ENCODE measurements at regions of chr15 and their contacts with region 1.

Region 1: DNA sequence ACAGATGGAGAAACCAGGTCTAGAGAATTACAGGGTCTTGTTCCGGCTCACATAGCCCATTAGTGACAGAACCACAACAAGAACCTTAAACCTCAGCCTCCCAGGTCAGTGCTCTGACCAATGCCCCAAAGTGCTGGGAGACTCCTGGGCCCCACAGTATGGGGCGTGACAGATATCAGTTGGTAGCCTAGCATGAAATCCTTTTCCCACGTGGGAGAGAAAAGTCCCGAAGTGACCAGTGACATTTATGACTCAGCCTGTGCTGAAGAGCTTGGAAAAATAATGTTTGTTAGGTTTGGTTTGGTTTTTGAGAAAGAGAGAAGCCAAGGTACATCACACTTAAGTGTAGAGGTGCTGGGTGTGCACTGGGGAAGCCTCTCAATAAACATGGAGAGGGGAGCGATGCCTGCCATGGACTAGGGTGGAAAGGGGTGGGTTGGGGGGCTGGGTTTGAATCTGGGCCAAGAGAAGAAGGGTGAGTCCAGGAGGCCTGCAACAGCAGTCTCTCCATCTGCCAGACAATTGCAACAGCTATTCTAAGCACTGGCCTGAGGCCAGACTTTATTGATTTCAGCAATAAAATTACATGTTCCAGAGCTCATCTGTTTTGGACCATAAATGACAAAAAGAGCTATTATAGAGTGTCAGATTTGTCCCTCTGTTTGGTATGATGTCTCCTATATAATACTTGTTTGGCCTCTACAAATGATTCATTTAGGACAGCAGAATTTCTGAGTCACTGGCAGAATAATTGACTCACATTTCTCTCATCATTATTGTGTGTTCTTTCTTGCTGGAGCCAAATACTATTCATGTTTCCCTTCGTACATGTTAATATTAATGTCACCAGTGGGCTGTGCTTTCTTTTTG is 43.4 kb downstream of the C2CD4A start:
- DNase-seq: no peak
- H3K4me3 Mint-ChIP-seq: peak overlapping the region; percentile 50
- H3K27ac Mint-ChIP-seq: peak overlapping the region; percentile 68
- H3K4me1 Mint-ChIP-seq: peaks cover 12% of the 10 kb centered on the region
- H3K27me3 Mint-ChIP-seq: peaks cover 2% of the 10 kb centered on the region

Region 2: DNA sequence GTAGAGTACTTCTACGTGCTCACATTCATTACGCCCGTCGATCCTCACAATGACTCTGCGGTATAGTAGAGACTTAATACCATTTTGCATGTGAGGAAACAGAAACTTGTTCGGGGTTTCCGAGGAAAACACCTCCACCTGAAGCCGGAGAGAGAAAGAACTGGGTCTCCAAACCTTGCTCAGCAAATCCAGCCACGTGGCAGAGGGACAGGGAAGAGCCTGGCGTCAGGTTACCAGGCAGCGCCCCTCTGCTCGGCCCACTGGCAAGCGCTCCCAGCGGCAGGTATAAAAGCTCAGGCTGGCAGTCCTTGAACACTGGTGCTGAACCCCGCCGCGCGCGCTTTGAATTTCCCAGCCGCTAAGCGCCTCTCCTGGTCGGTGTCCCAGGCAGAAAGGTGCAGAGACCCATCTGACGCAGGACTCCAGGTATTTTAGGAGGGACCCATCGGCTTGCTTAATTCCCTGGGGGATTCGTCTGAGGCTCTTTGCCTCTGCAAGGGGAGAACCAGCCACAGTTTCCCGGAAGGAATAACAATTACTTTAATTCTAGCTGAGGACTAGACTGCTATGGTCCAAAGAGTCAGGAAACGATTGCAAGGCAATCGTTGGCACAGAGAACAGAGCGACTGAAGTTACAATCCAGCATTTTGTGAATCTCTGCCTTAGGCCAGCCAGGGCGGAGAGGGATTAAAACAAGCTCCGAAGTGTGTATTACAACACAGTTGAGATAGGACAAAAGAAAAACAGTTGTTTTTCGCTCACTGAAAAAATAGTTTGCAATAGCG is 43.4 kb before region 1 on chr15 and contains the start of gene C2CD4A:
- intact Hi-C with region 1: no loop called
- DNase-seq: peak; percentile 84
- H3K4me3 Mint-ChIP-seq: peak within 1 kb of the TSS; percentile 78
- H3K27ac Mint-ChIP-seq: peak within 1 kb of the TSS; percentile 14
- H3K4me1 Mint-ChIP-seq: peaks cover 21% of the 10 kb centered on the region
- H3K27me3 Mint-ChIP-seq: peaks cover 54% of the 10 kb centered on the region
- total RNA-seq, gene C2CD4A: 0.05 and 0.24 TPM in 2 replicates

Region 3: DNA sequence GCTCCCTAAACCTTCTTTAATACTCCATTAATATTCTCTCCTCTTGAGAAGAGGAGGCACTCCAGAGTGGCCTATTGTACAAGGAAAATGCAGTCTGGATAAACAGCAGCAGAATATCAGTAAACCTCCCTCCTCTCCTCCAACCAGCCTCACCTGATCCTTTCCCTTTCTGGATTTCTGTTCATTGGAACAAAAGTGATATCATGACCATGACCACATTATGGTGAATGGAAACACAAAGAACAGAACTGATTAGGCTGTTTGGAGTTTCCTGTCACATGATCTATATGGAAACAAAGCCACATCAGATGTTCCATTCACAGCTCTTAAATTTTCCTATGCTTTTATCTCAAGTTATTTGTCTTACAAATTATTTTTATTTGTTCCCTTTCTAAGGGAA is 40.2 kb after region 1 on chr15:
- intact Hi-C with region 1: loop called (anchors 5 kb)
- DNase-seq: no peak
- H3K4me3 Mint-ChIP-seq: no peak overlapping the region
- H3K27ac Mint-ChIP-seq: peak overlapping the region; percentile 48
- H3K4me1 Mint-ChIP-seq: peaks cover 18% of the 10 kb centered on the region
- H3K27me3 Mint-ChIP-seq: peaks cover 3% of the 10 kb centered on the region